ENCODE measurements at regions of chr16 and their contacts with region 1.

Region 1: GRCh38 chr16:81669473-81670350 is 109.4 kb upstream of the PLCG2 start:
- DNase-seq: no peak
- H3K4me3 ChIP-seq: no peak overlapping the region
- H3K27ac ChIP-seq: no peak overlapping the region
- H3K4me1 ChIP-seq: no peaks in the 10 kb centered on the region
- H3K27me3 ChIP-seq: no peaks in the 10 kb centered on the region
- CTCF ChIP-seq: no peak
- POLR2A ChIP-seq: no peak

Region 2: DNA sequence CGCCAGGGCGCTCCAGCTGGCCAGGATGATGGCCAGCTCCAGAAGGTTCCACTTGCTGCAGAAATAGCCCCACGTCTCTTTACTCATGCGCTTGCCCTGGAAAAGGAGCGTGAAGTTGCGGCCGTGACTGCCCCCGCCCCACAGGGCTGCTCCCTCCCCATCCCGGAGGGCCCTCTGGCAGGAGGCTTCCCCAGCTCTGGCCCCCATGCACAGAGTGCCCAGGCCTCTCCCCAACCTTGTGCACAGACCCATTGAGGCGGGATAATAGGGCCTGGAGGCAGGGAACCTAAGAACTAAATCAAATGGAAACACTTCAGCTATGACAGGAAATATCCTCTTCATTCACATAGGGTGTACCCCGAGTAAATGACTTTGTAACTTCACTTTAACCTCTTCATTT is 552.3 kb before region 1 on chr16:
- intact Hi-C with region 1: no loop called
- DNase-seq: no peak
- H3K4me3 ChIP-seq: no peak overlapping the region
- H3K27ac ChIP-seq: no peak overlapping the region
- H3K4me1 ChIP-seq: no peaks in the 10 kb centered on the region
- H3K27me3 ChIP-seq: no peaks in the 10 kb centered on the region
- CTCF ChIP-seq: no peak
- POLR2A ChIP-seq: no peak

Region 3: DNA sequence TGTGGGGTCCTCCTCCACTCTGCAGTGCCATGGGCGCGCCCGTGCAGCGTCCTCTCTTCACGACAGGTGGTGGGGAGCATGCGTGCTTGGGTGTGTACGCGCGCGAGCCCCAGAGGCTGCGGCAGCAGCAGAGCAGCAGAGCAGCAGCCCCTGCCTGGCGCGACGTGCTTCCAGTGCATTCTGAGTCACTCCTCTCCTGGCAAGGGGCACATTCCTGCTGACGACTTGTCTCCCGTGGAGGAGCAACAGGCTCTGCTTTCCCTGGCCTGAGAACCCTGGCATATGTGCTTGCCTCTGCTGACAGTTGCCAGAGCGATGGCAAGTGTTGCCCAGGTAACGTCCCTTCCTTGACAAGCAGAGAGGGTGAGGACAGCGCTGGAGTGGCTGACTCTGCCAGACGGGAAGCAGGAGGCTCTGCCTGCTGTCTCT is 24.4 kb before region 1 on chr16:
- intact Hi-C with region 1: no loop called
- DNase-seq: peak; percentile 87 to 91
- H3K4me3 ChIP-seq: no peak overlapping the region
- H3K27ac ChIP-seq: peak overlapping the region; percentile 71 to 72
- H3K4me1 ChIP-seq: no peaks in the 10 kb centered on the region
- H3K27me3 ChIP-seq: no peaks in the 10 kb centered on the region
- CTCF ChIP-seq: no peak
- POLR2A ChIP-seq: no peak

Region 4: DNA sequence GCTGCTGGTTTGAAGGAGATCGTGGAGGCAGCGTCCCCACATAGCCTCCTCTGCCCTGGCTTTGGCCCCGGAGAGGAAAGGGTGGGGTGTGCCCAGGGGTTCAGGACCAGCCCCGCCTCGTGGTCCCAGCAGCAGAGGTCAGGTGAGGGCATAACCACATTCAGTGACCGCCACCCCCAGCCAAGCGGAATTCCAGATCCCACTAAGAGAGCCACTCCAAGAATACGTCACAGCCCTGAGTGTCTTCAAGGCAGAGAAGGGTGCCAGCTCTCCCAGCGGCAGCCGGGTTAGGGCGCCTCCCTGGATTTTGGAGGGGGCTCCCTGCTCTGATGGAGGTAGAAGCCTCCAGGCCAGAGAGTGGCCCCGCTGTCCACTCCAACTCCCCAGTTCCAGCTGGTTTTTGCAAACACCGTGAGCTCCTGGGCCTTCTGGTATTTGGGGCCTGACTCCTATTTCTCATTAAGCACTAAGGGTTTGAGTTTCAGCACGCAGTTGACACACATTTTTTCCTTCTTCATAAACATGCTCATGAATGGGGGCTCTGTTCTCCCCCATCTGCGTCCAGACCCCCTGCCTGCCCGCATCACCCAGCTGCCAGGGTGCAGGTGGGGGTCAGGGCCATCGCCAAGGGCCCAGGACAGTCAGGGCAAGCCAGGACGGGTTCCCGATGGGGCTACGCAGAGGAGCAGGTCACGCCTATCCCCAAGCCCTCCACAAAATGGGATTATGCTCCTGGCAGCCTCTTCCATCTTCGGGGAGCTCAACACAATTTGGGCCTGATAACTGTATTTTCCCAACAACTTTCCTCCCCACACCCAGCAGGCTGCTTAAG is 10.9 kb after region 1 on chr16:
- intact Hi-C with region 1: loop called (anchors 1 kb)
- DNase-seq: no peak
- H3K4me3 ChIP-seq: no peak overlapping the region
- H3K27ac ChIP-seq: peak overlapping the region; percentile 54 to 61
- H3K4me1 ChIP-seq: no peaks in the 10 kb centered on the region
- H3K27me3 ChIP-seq: no peaks in the 10 kb centered on the region
- CTCF ChIP-seq: no peak
- POLR2A ChIP-seq: no peak

Measured in breast epithelium (tissue), 4 donors.